ENCODE measurements at regions of chr4 and their contacts with region 1.

Region 1: DNA sequence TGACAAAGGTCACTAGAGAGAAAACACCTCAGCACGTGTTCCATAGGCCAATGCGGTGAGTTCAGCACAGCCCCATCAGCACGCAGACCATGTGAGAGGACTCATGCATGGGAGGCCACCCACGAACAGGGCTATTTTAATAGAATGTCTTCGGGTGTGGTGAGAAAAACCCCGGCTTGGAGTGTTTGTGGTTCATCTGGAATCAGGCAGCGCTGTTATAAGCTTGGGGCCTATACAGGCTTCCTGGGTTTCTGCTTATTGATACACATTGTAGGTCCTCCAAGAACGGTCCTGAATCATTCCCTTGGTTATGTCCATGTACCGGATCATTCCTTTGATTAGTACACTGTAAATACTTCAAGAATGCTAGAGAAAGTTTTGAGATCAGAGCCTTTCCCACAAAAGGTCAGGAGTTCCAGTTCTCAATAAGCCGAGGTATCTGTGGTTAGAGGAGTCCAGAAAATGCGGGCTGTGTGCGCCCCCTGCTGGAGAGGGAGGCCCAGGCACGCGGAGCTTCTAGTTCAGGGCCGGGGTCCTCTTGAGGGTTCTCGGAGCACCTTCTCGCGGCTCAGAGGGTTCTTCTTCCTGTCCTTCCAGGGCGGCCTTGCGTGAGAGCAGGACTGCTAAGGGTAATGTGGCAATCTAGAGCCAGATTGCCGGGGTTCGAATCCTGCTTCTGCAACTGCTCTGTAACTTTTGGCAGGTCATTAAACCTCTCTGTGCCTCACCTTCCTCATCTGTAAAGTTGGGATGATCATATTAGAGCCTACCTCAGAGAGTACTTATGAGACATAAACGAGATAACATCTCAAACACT is 51.8 kb downstream of the TLR10 start:
- DNase-seq: peak; percentile 70 to 87 (median 71)
- H3K4me3 ChIP-seq: no peak overlapping the region
- H3K4me3 Mint-ChIP-seq: peak overlapping the region in 5 of 7 donors; percentile 19 to 52 (median 46)
- H3K27ac ChIP-seq: no peak overlapping the region
- H3K27ac Mint-ChIP-seq: peak overlapping the region in 1 of 8 donors; percentile 65
- H3K4me1 ChIP-seq: peaks cover 10% of the 10 kb centered on the region
- H3K4me1 Mint-ChIP-seq: peaks cover 10 to 22% (median 19%) of the 10 kb centered on the region in 3 donors
- H3K27me3 ChIP-seq: no peaks in the 10 kb centered on the region
- H3K27me3 Mint-ChIP-seq: peaks cover 0 to 1% of the 10 kb centered on the region in 2 donors

Region 2: DNA sequence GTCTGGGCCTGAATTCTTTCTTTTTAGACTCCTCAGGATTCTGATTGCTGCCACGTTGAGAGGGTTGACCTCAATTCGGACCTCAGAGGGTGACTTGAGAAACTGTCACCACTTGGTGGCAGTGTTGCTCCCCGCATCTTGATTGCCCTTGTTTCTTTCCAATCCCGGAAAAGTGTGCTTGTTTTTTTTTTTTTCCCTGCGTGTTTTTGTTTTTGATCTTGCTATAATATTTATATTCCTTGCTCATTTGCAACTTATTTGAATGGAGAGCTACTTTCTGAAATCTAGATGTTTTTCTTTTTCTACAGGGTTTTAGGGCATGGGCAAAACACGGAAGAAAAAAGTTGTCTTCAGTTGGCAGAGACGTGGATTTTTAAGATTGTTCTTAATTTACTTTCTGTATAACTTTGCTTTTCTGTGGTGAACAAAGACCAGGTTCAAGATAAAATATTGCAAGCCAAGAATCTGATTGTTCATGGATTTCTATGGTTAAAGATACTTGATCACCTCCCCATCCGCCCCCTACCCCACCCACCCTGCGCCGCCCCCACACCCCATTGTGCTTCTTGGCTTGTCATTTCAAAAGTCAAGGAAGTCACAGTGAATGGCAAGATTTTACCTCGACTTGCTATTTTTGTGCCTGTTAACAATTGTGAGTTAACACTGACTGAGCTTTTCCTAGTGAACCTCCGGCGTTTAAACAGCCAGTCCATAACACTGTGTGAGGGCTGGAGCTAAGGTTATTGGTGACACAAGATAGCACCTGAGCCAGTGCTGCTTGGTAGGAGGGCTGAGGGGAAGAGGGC is 668.7 kb before region 1 on chr4:
- CTCF ChIA-PET with region 1: interaction called, 12 read pairs
- POLR2A ChIA-PET with region 1: no interaction called
- DNase-seq: peak; percentile 33 to 70 (median 44)
- H3K4me3 ChIP-seq: no peak overlapping the region
- H3K4me3 Mint-ChIP-seq: peak overlapping the region; percentile 18 to 84 (median 78)
- H3K27ac ChIP-seq: no peak overlapping the region
- H3K27ac Mint-ChIP-seq: peak overlapping the region in 6 of 8 donors; percentile 1 to 78 (median 40)
- H3K4me1 ChIP-seq: no peaks in the 10 kb centered on the region
- H3K4me1 Mint-ChIP-seq: peaks cover 8 to 15% (median 14%) of the 10 kb centered on the region in 3 donors
- H3K27me3 ChIP-seq: no peaks in the 10 kb centered on the region
- H3K27me3 Mint-ChIP-seq: peaks cover 0 to 2% of the 10 kb centered on the region in 2 donors

Region 3: DNA sequence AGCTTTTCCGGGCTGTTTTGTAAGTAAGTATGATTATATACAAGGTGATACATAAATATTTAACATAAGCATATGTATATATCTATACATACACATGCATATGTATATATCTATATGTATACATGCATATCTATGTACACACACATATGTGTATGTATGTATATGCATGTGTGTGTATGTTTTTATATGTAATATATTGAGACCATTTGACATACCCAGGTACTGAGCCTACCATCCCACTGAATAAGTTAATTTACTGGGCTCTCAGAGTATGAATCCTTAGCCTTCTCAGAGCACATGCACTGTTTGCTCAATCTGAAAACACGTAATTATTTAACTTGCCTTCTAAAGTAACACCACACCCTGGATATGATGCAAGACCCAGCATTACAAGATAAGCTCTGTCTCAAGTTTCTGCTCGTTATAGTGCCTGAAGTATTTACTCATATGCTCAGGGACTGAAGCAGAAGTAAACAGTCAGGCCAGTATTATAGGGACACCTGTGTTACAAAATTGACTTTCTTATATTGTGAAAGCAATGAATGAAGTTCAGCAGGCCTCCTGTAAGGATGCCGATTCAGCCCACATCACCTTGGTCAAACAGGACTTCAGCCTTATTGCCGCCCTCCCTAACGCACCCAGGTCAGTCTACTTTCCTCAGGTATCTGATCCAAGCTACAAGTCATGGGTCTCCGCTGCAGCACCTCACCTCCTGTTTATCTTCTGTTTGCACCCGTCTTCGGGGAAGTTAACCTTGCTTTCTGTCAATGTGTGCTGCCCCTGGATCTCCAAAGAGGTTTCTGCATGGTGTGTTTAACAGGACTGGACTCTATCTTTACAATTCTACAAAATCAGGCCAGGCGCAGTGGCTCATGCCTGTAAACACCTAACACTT is 110.0 kb before region 1 on chr4:
- CTCF ChIA-PET with region 1: no interaction called
- POLR2A ChIA-PET with region 1: no interaction called
- DNase-seq: no peak
- H3K4me3 ChIP-seq: no peak overlapping the region
- H3K4me3 Mint-ChIP-seq: no peak overlapping the region
- H3K27ac ChIP-seq: peak overlapping the region; percentile 28
- H3K27ac Mint-ChIP-seq: peak overlapping the region in 1 of 8 donors; percentile 12
- H3K4me1 ChIP-seq: peaks cover 7% of the 10 kb centered on the region
- H3K4me1 Mint-ChIP-seq: peaks cover 0 to 7% (median 6%) of the 10 kb centered on the region in 3 donors
- H3K27me3 ChIP-seq: no peaks in the 10 kb centered on the region
- H3K27me3 Mint-ChIP-seq: no peaks in the 10 kb centered on the region

Measured in CD8-positive, alpha-beta memory T cell (primary cell).